ENCODE measurements at regions of chr20 and their contacts with region 1.

Region 1: GRCh38 chr20:31560094-31560899 is 44.8 kb upstream of the ID1 start:
- DNase-seq: peak; percentile 83
- H3K4me3 Mint-ChIP-seq: no peak overlapping the region
- H3K27ac Mint-ChIP-seq: peak overlapping the region; percentile 78
- H3K4me1 Mint-ChIP-seq: peaks cover 7% of the 10 kb centered on the region
- H3K27me3 Mint-ChIP-seq: no peaks in the 10 kb centered on the region

Region 2: DNA sequence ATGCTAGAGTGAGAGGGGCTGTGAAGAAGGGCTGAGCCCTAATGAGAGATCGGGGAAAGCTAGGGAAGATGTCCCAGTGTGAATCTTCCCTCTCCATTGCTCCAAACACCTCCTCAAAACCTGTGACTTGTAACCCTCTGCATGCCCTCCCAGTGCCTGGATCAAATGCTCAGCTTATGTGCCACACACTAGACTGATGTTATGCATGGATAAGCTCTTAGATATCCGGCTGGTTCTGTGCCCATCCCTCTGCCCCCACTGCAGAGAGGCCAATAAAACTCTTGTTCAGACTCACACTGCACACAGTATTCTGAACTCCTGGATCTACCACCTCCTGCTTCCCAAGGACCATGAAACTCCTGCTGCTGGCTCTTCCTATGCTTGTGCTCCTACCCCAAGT is 192.0 kb before region 1 on chr20 and contains the start of gene DEFB118:
- CTCF ChIA-PET with region 1: no interaction called
- POLR2A ChIA-PET with region 1: no interaction called
- DNase-seq: no peak
- H3K4me3 Mint-ChIP-seq: no peak within 1 kb of the TSS
- H3K27ac Mint-ChIP-seq: no peak within 1 kb of the TSS
- H3K4me1 Mint-ChIP-seq: no peaks in the 10 kb centered on the region
- H3K27me3 Mint-ChIP-seq: no peaks in the 10 kb centered on the region
- total RNA-seq, gene DEFB118: not detected

Region 3: GRCh38 chr20:31403886-31404285 is 156.4 kb before region 1 on chr20:
- CTCF ChIA-PET with region 1: no interaction called
- POLR2A ChIA-PET with region 1: no interaction called
- DNase-seq: no peak
- H3K4me3 Mint-ChIP-seq: no peak overlapping the region
- H3K27ac Mint-ChIP-seq: no peak overlapping the region
- H3K4me1 Mint-ChIP-seq: no peaks in the 10 kb centered on the region
- H3K27me3 Mint-ChIP-seq: no peaks in the 10 kb centered on the region

Region 4: DNA sequence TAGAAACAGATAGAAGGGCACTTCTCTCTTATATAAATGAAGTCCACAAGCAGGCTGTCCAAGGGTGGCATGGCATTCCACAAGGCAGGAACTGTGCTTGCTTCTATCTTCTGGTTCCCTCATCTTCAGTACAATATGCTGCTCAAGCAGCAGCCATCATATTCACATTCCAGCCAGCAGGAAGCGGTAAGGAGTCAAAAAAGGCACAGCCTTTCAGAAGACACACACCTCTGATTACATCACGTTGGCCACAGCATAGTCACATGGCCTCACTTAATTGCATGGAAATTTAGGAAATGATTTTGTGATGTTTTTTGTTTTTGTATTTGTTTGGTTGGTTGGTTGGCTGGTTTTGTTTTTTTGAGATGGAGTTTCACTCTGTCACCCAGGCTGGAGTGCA is 66.2 kb before region 1 on chr20:
- CTCF ChIA-PET with region 1: no interaction called
- POLR2A ChIA-PET with region 1: no interaction called
- DNase-seq: no peak
- H3K4me3 Mint-ChIP-seq: no peak overlapping the region
- H3K27ac Mint-ChIP-seq: no peak overlapping the region
- H3K4me1 Mint-ChIP-seq: no peaks in the 10 kb centered on the region
- H3K27me3 Mint-ChIP-seq: peaks cover 9% of the 10 kb centered on the region

Region 5: GRCh38 chr20:31547017-31547675 is 13.2 kb before region 1 on chr20:
- CTCF ChIA-PET with region 1: interaction called, 36 read pairs
- POLR2A ChIA-PET with region 1: interaction called, 3 read pairs
- DNase-seq: peak; percentile 85
- H3K4me3 Mint-ChIP-seq: peak overlapping the region; percentile 83
- H3K27ac Mint-ChIP-seq: peak overlapping the region; percentile 93
- H3K4me1 Mint-ChIP-seq: peaks cover 32% of the 10 kb centered on the region
- H3K27me3 Mint-ChIP-seq: no peaks in the 10 kb centered on the region

Region 6: GRCh38 chr20:31605031-31605901 is 45.0 kb after region 1 on chr20 and contains the start of gene ID1:
- CTCF ChIA-PET with region 1: interaction called, 282 read pairs
- POLR2A ChIA-PET with region 1: no interaction called
- DNase-seq: peak; percentile 92
- H3K4me3 Mint-ChIP-seq: peak within 1 kb of the TSS; percentile 84
- H3K27ac Mint-ChIP-seq: peak within 1 kb of the TSS; percentile 61
- H3K4me1 Mint-ChIP-seq: peaks cover 29% of the 10 kb centered on the region
- H3K27me3 Mint-ChIP-seq: peaks cover 46% of the 10 kb centered on the region
- total RNA-seq, gene ID1: 0.85 to 1.4 TPM

Measured in activated CD4-positive, alpha-beta T cell treated with anti-CD3 and anti-CD28 coated beads, Interleukin-2, amount 10 ng/mL, durations not matched to agents 7 days and 5 days (primary cell).